GM12878 (cell line): ENCODE measurements at regions of chr16 and their contacts with region 1.

Region 1: GRCh38 chr16:10039220-10040096 is 142.8 kb downstream of the GRIN2A start:
- DNase-seq: no peak
- ATAC-seq: peak; percentile 73
- H3K4me3 ChIP-seq: peak overlapping the region; percentile 60
- H3K27ac ChIP-seq: no peak overlapping the region
- H3K4me1 ChIP-seq: no peaks in the 10 kb centered on the region
- H3K27me3 ChIP-seq: no peaks in the 10 kb centered on the region
- CTCF ChIP-seq: peak; percentile 20 to 51 (median 32); a peak in 4 of 6 replicates
- EP300 ChIP-seq: no peak
- POLR2A ChIP-seq: no peak
- RAD21 ChIP-seq: peak; percentile 54

Region 2: DNA sequence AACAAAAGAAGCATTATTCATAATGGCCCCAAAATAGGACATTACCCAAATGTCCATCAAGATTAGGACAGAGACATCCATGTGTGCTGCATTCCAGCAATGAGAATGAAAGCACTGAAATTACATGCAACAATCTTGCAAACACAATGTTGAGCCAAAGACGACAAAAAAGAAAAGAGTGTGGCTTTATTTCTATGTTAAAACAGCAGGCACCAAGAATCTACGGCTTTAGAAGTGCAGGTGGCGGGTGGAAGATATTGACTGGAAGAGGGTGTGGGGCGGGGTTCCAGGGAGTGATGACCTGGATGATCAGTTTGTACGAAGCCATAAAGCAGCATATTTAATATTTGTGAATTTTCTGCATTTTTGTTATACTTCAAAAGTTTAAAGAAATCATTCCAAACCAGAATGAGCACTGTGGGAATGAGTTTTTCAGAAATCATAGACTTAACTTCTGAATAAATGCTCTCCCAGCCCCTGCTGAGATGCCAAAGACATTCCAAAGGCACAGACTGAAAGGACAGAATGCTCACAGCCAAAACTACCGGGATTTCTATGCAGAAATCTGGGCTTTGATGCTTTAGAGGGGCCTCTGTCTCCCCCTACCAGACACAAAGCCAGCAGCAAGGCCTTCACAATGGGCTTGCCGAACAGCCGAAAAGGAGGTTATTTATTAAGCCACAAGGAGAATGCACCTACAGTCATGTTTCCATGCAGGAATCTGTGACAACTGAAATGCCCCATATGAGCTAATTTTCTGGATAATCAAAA is 218.8 kb before region 1 on chr16:
- CTCF ChIA-PET with region 1: no interaction called
- POLR2A ChIA-PET with region 1: no interaction called
- RAD21 ChIA-PET with region 1: no interaction called
- SMC1A ChIA-PET with region 1: no interaction called
- in situ Hi-C with region 1: no loop called
- intact Hi-C with region 1: loop called (anchors 10 kb)
- DNase-seq: no peak
- ATAC-seq: no peak
- H3K4me3 ChIP-seq: no peak overlapping the region
- H3K27ac ChIP-seq: no peak overlapping the region
- H3K4me1 ChIP-seq: no peaks in the 10 kb centered on the region
- H3K27me3 ChIP-seq: no peaks in the 10 kb centered on the region
- CTCF ChIP-seq: no peak
- EP300 ChIP-seq: no peak
- POLR2A ChIP-seq: no peak
- RAD21 ChIP-seq: 0 out of 2 replicates have a peak, but pooled peaks have one; percentile 15

Region 3: DNA sequence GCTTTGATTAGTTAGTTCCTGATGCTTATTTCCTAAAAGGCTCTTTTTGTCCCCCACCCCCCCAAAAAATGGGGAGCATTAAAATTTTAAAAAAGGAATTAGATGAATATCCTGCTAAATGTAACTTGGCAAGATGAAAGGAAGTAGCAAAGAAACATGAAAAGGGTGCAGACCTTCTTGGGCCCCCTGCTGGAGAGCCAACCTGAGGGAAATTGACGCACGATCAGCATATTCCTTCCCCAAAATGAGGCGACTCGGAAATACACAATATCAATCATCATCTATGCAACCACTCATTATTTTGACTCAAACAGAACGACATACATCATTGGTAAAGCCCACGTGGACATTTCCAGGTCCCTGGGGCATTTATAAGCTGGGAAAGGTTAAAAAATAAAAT is 83.1 kb after region 1 on chr16:
- CTCF ChIA-PET with region 1: no interaction called
- POLR2A ChIA-PET with region 1: no interaction called
- RAD21 ChIA-PET with region 1: no interaction called
- SMC1A ChIA-PET with region 1: interaction called, 3 read pairs
- in situ Hi-C with region 1: no loop called
- intact Hi-C with region 1: loop called (anchors 5 kb)
- DNase-seq: no peak
- ATAC-seq: peak; percentile 21; the same call in 1 of the 3 replicates
- H3K4me3 ChIP-seq: no peak overlapping the region
- H3K27ac ChIP-seq: no peak overlapping the region
- H3K4me1 ChIP-seq: no peaks in the 10 kb centered on the region
- H3K27me3 ChIP-seq: no peaks in the 10 kb centered on the region
- CTCF ChIP-seq: peak; percentile 26 to 31 (median 27); a peak in 4 of 6 replicates
- EP300 ChIP-seq: no peak
- POLR2A ChIP-seq: no peak
- RAD21 ChIP-seq: peak; percentile 30